ENCODE measurements at regions of chr18 and their contacts with region 1.

Region 1: GRCh38 chr18:57881818-57882413 is 78.8 kb upstream of the ATP8B1 start:
- DNase-seq: peak; percentile 76
- ATAC-seq: peak; percentile 95
- H3K4me3 ChIP-seq: no peak overlapping the region
- H3K27ac ChIP-seq: no peak overlapping the region
- H3K4me1 ChIP-seq: peaks cover 7% of the 10 kb centered on the region
- H3K27me3 ChIP-seq: no peaks in the 10 kb centered on the region
- CTCF ChIP-seq: peak; percentile 91

Region 2: GRCh38 chr18:57630002-57630753 is 251.7 kb before region 1 on chr18:
- CTCF ChIA-PET with region 1: interaction called, 11 read pairs
- POLR2A ChIA-PET with region 1: no interaction called
- intact Hi-C with region 1: no loop called
- DNase-seq: peak; percentile 88
- ATAC-seq: peak; percentile 86
- H3K4me3 ChIP-seq: peak overlapping the region; percentile 71
- H3K27ac ChIP-seq: peak overlapping the region; percentile 63
- H3K4me1 ChIP-seq: peaks cover 14% of the 10 kb centered on the region
- H3K27me3 ChIP-seq: no peaks in the 10 kb centered on the region
- CTCF ChIP-seq: peak; percentile 77

Region 3: DNA sequence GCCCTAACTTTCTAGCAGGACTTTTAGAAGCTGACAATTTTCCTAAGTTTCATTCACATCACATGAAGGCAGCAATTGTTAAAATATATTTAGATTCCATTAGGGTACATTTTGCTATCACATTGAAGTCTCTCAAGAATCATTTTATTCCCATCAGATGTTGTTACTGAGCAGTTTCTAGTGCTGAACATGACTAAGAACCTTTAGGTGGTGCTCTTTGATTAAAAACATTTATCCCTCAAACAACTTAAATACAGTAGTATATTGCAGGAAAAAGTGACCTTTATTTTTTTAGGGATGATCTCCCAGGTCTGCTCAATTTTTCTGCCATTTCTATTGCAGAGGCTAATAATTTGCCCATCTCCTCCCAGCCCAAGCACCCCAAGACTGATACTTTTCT is 237.4 kb before region 1 on chr18:
- CTCF ChIA-PET with region 1: no interaction called
- POLR2A ChIA-PET with region 1: no interaction called
- intact Hi-C with region 1: loop called (anchors 5 kb)
- DNase-seq: peak; percentile 41
- ATAC-seq: peak; percentile 73
- H3K4me3 ChIP-seq: no peak overlapping the region
- H3K27ac ChIP-seq: no peak overlapping the region
- H3K4me1 ChIP-seq: peaks cover 4% of the 10 kb centered on the region
- H3K27me3 ChIP-seq: no peaks in the 10 kb centered on the region
- CTCF ChIP-seq: peak; percentile 56

Region 4: GRCh38 chr18:57768537-57769326 is 113.2 kb before region 1 on chr18:
- CTCF ChIA-PET with region 1: no interaction called
- POLR2A ChIA-PET with region 1: no interaction called
- intact Hi-C with region 1: no loop called
- DNase-seq: peak; percentile 59
- ATAC-seq: peak; percentile 86
- H3K4me3 ChIP-seq: no peak overlapping the region
- H3K27ac ChIP-seq: peak overlapping the region; percentile 63
- H3K4me1 ChIP-seq: peaks cover 45% of the 10 kb centered on the region
- H3K27me3 ChIP-seq: no peaks in the 10 kb centered on the region
- CTCF ChIP-seq: no peak

Region 5: DNA sequence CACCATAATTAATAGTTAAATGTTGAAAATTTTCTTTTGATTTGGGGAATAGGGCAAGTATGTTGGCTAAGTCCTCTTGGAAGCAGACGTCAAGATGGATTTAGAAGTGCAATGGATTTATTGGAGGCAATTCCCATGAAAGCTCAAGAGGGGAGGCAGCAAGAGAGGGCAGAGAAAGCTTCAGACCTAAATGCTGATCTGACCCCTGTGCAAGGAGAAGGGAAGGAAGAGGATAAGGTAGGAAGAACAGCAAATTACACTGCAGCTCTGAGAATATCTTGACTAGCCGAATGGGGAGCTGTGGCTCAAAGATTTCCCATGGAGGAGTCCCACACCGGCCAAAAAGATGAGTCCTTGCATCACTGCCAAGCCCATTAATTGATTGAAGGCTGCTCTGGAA is 31.9 kb before region 1 on chr18:
- CTCF ChIA-PET with region 1: no interaction called
- POLR2A ChIA-PET with region 1: no interaction called
- intact Hi-C with region 1: no loop called
- DNase-seq: no peak
- ATAC-seq: no peak
- H3K4me3 ChIP-seq: no peak overlapping the region
- H3K27ac ChIP-seq: no peak overlapping the region
- H3K4me1 ChIP-seq: peaks cover 42% of the 10 kb centered on the region
- H3K27me3 ChIP-seq: no peaks in the 10 kb centered on the region
- CTCF ChIP-seq: no peak

Region 6: DNA sequence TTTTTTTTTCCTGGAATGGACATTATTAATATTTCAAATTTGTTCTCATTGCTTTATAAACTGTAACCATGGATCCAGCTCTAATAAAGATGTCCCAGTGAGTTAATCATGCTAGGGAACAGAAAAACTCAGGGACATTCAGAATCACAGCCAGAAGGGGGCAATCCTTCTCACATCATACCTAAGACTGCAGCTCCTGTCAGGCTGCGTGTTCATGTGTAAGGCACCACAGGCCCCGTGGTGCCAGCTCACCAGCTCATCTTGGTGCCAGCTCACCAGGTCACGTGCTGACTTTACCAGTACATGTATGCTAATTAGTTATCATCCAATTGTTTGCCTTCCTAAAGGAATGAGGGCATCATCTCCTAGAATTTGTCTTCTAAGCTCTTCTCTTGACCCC is 77.4 kb after region 1 on chr18:
- CTCF ChIA-PET with region 1: no interaction called
- POLR2A ChIA-PET with region 1: no interaction called
- intact Hi-C with region 1: loop called (anchors 1 kb)
- DNase-seq: peak; percentile 83
- ATAC-seq: peak; percentile 92
- H3K4me3 ChIP-seq: no peak overlapping the region
- H3K27ac ChIP-seq: no peak overlapping the region
- H3K4me1 ChIP-seq: peaks cover 7% of the 10 kb centered on the region; the same call in 1 of the 2 replicates
- H3K27me3 ChIP-seq: no peaks in the 10 kb centered on the region
- CTCF ChIP-seq: peak; percentile 80

Region 7: GRCh38 chr18:58025733-58026132 is 143.8 kb after region 1 on chr18:
- CTCF ChIA-PET with region 1: no interaction called
- POLR2A ChIA-PET with region 1: no interaction called
- intact Hi-C with region 1: no loop called
- DNase-seq: no peak
- ATAC-seq: no peak
- H3K4me3 ChIP-seq: no peak overlapping the region
- H3K27ac ChIP-seq: no peak overlapping the region
- H3K4me1 ChIP-seq: peaks cover 8% of the 10 kb centered on the region; the same call in 1 of the 2 replicates
- H3K27me3 ChIP-seq: no peaks in the 10 kb centered on the region
- CTCF ChIP-seq: no peak

Region 8: GRCh38 chr18:58117786-58118403 is 236.0 kb after region 1 on chr18:
- CTCF ChIA-PET with region 1: interaction called, 6 read pairs
- POLR2A ChIA-PET with region 1: no interaction called
- intact Hi-C with region 1: loop called (anchors 1 kb)
- DNase-seq: peak; percentile 93
- ATAC-seq: peak; percentile 84
- H3K4me3 ChIP-seq: no peak overlapping the region
- H3K27ac ChIP-seq: peak overlapping the region; percentile 74
- H3K4me1 ChIP-seq: peaks cover 31% of the 10 kb centered on the region
- H3K27me3 ChIP-seq: no peaks in the 10 kb centered on the region
- CTCF ChIP-seq: no peak

Region 9: GRCh38 chr18:58180738-58181353 is 298.9 kb after region 1 on chr18:
- CTCF ChIA-PET with region 1: interaction called, 4 read pairs
- POLR2A ChIA-PET with region 1: no interaction called
- intact Hi-C with region 1: loop called (anchors 1 kb)
- DNase-seq: peak; percentile 72
- ATAC-seq: no peak
- H3K4me3 ChIP-seq: no peak overlapping the region
- H3K27ac ChIP-seq: no peak overlapping the region
- H3K4me1 ChIP-seq: peaks cover 38% of the 10 kb centered on the region
- H3K27me3 ChIP-seq: no peaks in the 10 kb centered on the region
- CTCF ChIP-seq: peak; percentile 94

Region 10: DNA sequence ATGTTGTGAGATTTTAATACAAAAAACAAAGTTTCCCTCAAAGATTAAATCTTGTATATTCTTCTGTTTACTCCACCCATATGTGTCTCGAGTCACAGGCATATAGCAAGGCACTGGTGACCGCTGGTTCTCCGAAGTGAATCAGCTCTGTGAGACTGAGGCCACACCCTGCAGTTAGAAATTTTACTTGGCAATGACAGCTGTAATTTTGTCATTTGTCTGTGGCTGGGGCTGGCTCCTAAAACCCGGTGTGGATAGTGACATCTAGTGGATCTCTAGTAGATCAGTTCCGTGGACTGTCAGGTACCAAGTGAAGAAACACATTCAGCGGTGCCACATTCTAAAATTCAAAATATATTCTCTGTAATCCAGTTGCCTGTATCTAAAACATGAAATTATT is 440.1 kb after region 1 on chr18:
- CTCF ChIA-PET with region 1: no interaction called
- POLR2A ChIA-PET with region 1: no interaction called
- intact Hi-C with region 1: loop called (anchors 5 kb)
- DNase-seq: peak; percentile 95
- ATAC-seq: peak; percentile 99
- H3K4me3 ChIP-seq: no peak overlapping the region
- H3K27ac ChIP-seq: peak overlapping the region; percentile 63
- H3K4me1 ChIP-seq: peaks cover 11% of the 10 kb centered on the region
- H3K27me3 ChIP-seq: no peaks in the 10 kb centered on the region
- CTCF ChIP-seq: peak; percentile 76